ENCODE measurements at regions of chr2 and their contacts with region 1.

Region 1: GRCh38 chr2:4090700-4091630 is 387.6 kb downstream of the DCDC2C start:
- DNase-seq: no peak
- ATAC-seq: no peak
- H3K4me3 ChIP-seq: no peak overlapping the region
- H3K27ac ChIP-seq: no peak overlapping the region
- H3K4me1 ChIP-seq: no peaks in the 10 kb centered on the region
- H3K27me3 ChIP-seq: no peaks in the 10 kb centered on the region
- CTCF ChIP-seq: no peak

Region 2: GRCh38 chr2:3919622-3920021 is 171.3 kb before region 1 on chr2:
- CTCF ChIA-PET with region 1: no interaction called
- POLR2A ChIA-PET with region 1: no interaction called
- in situ Hi-C with region 1: no loop called
- intact Hi-C with region 1: no loop called
- DNase-seq: no peak
- ATAC-seq: no peak
- H3K4me3 ChIP-seq: no peak overlapping the region
- H3K27ac ChIP-seq: no peak overlapping the region
- H3K4me1 ChIP-seq: no peaks in the 10 kb centered on the region
- H3K27me3 ChIP-seq: peaks cover 2% of the 10 kb centered on the region; the same call in 1 of the 2 replicates
- CTCF ChIP-seq: no peak

Region 3: DNA sequence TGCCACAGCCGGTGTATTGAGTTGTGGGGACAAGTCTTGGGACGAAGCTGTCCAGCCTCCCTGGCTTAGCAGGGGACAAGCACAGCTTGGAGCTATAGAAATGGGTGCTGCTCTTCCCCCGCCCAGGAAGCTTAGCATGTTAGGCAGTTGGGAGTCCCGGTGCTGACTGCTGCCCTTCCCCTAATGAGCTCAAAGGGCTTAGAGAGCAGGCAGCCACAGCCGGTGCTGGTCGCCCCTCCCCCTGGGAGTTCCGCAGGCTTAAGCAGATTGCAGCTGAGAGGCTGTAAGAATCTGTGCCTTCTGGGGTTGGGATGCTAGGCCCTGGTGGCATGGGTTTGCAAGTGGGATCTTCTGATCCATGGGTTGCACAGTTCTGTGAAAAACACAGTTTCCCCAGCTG is 150.3 kb before region 1 on chr2:
- CTCF ChIA-PET with region 1: no interaction called
- POLR2A ChIA-PET with region 1: no interaction called
- in situ Hi-C with region 1: no loop called
- intact Hi-C with region 1: no loop called
- DNase-seq: no peak
- ATAC-seq: no peak
- H3K4me3 ChIP-seq: no peak overlapping the region
- H3K27ac ChIP-seq: no peak overlapping the region
- H3K4me1 ChIP-seq: no peaks in the 10 kb centered on the region
- H3K27me3 ChIP-seq: no peaks in the 10 kb centered on the region
- CTCF ChIP-seq: no peak

Region 4: GRCh38 chr2:5520463-5520972 is 1429.6 kb after region 1 on chr2:
- CTCF ChIA-PET with region 1: no interaction called
- POLR2A ChIA-PET with region 1: interaction called, 11 read pairs
- in situ Hi-C with region 1: no loop called
- intact Hi-C with region 1: no loop called
- DNase-seq: peak; percentile 2
- ATAC-seq: peak; percentile 48; the same call in 1 of the 2 replicates
- H3K4me3 ChIP-seq: 0 out of 4 replicates have a peak overlapping the region, but pooled peaks of 1 of the 2 experiments have one; percentile 6
- H3K27ac ChIP-seq: no peak overlapping the region
- H3K4me1 ChIP-seq: no peaks in the 10 kb centered on the region
- H3K27me3 ChIP-seq: no peaks in the 10 kb centered on the region
- CTCF ChIP-seq: no peak